Left lung (tissue), 14 donors: ENCODE measurements at regions of chr3 and their contacts with region 1.

Region 1: GRCh38 chr3:67790043-67790442 is 135.6 kb upstream of the SUCLG2 start:
- DNase-seq: peak in 2 of 4 donors; percentile 13 to 41
- ATAC-seq: peak; percentile 92
- H3K4me3 ChIP-seq: no peak overlapping the region
- H3K27ac ChIP-seq: no peak overlapping the region
- H3K4me1 ChIP-seq: no peaks in the 10 kb centered on the region
- H3K27me3 ChIP-seq: no peaks in the 10 kb centered on the region
- CTCF ChIP-seq: peak; percentile 36 to 64

Region 2: DNA sequence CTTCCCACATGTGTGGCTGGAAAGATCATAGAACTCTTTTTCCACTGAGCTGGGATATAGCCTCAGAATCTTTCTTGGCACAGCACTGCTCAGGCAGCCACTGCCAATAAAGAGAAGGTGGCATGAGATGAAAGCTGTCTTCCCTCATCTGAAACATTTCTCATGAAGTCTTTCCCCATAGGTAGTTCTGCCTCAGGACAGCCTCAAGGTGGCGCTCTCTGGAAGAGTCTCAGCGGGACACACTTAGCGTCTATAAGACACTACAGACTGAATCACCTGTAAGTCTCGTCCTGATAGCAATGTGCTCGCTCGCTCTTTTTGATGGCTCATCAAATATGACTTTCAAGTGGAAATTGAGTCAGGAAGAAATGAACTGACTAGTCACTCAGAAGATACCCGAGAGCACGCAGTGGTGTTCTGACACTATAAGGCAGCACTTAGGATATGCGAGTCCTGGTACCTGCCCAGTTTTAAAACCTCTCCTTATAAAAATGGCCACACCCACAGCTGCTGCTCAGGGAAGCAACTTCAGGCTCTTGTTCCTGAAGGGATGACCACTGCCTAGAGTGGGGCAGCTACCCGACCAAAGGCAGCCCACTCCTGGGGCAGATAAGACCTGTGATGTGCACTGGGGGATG is 405.2 kb before region 1 on chr3:
- intact Hi-C with region 1: loop called in 1 of 2 experiments (anchors 10 kb)
- DNase-seq: peak in 2 of 4 donors; percentile 31 to 37
- ATAC-seq: peak; percentile 81
- H3K4me3 ChIP-seq: no peak overlapping the region
- H3K27ac ChIP-seq: no peak overlapping the region
- H3K4me1 ChIP-seq: no peaks in the 10 kb centered on the region
- H3K27me3 ChIP-seq: no peaks in the 10 kb centered on the region
- CTCF ChIP-seq: peak in 1 of 2 donors; percentile 23